Sciatic nerve (tissue), 2 donors: ENCODE measurements at regions of chr5 and their contacts with region 1.

Region 1: DNA sequence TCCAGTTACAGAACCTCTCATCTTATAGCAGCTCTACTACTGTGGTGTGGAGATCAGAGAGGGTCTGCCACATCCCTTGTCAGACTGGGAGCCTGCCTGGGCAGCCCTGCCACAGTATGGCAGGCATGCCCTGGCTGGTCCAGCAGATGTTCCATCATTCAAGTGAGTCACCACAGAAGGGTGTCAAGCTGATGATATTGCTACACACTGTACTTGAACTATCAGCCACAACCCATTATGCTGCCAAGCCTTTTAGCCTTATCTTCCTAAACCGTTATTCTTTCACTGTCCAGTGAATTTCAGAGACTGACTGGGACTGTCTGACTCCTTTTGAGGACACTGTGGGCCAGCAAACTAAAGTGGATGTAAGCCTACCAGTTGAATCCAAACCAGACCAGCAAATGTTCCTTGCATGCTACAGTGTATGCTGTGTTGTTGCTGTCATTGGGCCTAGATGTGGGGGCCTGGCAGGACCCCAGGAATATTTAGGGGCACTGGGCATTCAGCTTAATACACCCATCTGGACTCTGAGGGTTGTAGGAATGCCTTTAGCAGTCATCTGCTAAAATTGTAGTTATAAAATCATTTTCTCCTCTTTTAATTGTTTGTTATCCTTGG is 202.6 kb downstream of the NR3C1 start:
- DNase-seq: no peak
- ATAC-seq: peak; percentile 73

Region 2: DNA sequence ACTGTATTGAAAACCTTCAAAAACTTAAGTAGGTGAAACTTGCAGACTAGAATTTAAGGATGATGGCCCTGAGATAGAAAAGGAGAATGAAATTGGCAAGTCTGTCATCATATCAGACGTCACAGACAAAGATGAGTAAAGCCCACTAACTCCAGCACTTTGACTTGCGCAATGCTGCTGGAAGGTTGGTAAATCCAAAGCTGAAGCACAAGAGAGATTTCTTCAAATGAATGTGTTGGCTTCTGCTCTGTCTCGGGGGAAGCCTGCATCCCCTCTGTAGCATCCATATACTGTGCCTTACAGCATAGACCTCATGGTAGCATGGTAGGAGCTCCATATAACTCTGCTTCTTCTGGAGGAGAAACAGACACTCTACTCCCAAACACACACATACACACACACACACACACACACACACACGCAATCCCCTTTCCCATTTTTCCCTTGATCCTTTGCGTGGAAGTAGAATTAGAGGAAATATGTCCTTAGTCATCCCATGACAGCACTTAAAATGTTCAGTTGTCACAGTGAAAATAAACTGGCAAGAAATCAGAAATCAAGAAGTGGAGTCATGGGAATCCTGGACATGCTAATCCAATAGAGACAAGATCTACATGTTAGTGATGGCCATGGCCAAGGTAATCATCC is 38.9 kb before region 1 on chr5:
- intact Hi-C with region 1: no loop called
- DNase-seq: no peak
- ATAC-seq: peak; percentile 86

Region 3: DNA sequence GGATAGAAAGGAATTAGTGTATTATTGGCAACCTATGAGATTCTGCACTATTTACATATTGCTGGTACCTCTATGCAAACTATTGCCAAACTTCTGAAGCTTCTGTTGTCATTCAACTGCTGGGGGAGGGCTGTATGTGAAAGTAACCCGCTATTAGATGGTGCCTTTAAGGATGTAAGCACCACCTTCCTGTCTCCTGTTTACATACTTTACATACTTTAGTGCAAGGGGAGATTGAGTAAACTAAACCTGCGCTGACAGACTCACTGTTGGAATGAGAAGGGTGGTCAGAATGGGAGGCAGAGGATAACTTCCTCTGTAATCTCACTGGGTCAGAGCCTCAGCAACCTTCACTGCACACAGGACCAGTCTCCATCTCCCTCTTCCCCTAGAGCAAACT is 78.8 kb after region 1 on chr5:
- intact Hi-C with region 1: loop called (anchors 10 kb)
- DNase-seq: no peak
- ATAC-seq: no peak